ENCODE measurements at regions of chr4 and their contacts with region 1.

Region 1: GRCh38 chr4:10530137-10530786 is 73.0 kb upstream of the ZNF518B start:
- DNase-seq: no peak

Region 2: GRCh38 chr4:10157478-10158332 is 372.6 kb before region 1 on chr4:
- in situ Hi-C with region 1: loop called (anchors 25 kb)
- DNase-seq: peak; percentile 92

Region 3: DNA sequence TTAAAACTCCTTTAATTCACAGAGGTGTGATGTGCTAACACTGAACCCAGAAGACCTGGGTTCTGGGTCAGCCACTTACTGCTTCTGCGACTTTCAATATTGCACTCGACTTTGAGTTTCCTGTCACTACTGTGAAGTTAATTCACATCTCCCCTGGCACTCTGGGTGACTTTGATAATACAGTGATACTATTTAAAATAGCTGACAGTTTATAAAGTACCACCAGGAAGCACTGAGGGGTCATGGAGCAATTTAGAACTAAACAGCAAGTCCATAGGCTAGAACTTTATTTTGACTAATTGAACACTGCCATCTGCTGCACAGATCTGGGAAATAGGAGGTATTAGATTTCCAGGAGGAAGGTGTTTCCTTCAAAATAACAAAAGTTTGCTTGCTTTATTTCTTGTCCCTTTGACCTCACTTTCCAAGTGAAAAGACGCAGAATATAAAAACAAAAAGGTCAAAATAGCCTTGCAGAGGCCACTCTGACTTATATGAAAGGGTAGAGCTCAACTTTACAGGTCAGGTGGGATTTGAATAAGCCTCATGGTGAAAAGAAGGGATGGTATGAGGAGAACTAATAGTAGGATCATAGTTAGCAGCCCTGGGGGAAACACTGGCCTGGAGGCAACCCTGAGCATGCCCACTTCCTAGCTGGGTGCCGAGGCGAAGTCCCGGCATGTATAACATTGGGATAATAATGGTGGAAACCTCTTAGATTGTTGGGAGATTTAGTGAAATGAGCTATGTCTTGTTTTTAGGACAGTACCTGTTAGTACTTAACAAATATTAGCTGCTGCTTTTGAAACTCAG is 126.4 kb before region 1 on chr4:
- in situ Hi-C with region 1: loop called (anchors 25 kb)
- DNase-seq: peak; percentile 81

Region 4: DNA sequence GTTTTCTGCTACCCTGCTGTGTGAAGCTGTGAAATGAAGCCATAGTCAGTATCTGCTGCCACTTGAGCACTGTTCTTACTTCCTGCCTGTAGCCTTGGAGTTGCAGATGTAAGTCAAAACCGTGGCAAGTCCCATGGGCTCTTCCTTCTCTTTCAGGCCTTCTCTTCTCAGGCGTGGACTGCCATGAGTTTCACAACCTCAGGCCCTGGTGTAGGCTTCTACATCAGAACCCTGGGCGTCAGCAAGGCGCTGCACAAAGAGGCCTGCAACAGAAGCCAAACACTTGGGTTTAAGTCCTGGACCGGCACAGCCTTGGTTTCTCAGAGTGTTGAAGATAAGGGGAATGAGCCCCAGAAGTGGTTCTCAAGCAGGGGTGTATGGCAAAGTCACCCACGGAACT is 75.5 kb before region 1 on chr4:
- in situ Hi-C with region 1: no loop called
- DNase-seq: no peak